SK-N-SH (cell line): ENCODE measurements at regions of chr2 and their contacts with region 1.

Region 1: GRCh38 chr2:217864963-217865772 is 137.6 kb downstream of the TNS1 start:
- DNase-seq: no peak
- H3K4me3 ChIP-seq: no peak overlapping the region
- H3K27ac ChIP-seq: no peak overlapping the region; a peak in 1 of 4 replicates
- H3K4me1 ChIP-seq: peaks cover 8 to 9% of the 10 kb centered on the region in 2 experiments; a peak in 2 of 4 replicates
- H3K27me3 ChIP-seq: no peaks in the 10 kb centered on the region
- CTCF ChIP-seq: no peak
- EP300 ChIP-seq: no peak
- RAD21 ChIP-seq: no peak

Region 2: DNA sequence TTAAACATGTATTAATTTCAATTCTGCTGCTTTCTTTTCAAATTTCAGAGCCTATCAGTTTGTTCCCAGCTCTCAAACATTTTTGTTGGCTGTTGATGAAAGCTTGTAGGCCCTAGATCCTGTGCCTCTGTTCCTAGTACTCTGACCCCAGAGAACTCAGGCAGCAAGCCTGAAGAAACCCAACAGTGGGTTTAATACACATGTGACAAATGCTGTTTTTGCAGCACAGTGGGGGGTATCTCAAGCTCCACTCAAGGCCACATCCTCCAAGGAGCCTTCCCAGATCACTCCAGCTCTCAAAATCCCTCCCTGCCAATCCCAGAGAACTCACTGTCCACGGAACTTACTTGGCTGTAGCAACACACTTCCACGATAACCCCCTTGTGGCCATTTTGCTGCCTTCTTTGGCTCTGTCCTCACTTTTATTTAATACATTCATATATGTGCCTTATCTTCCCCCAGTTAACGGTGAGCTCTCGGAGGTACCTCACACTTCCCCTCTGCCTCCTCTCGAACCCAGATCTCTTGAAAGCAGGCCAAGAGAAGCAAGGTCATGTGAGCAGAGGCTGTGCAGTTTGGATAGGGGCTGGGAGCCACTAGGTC is 15.2 kb after region 1 on chr2:
- CTCF ChIA-PET with region 1: interaction called, 11 read pairs
- POLR2A ChIA-PET with region 1: no interaction called
- DNase-seq: no peak
- H3K4me3 ChIP-seq: no peak overlapping the region
- H3K27ac ChIP-seq: no peak overlapping the region
- H3K4me1 ChIP-seq: peaks cover 0 to 16% of the 10 kb centered on the region in 2 experiments; a peak in 1 of 4 replicates
- H3K27me3 ChIP-seq: no peaks in the 10 kb centered on the region
- CTCF ChIP-seq: 0 out of 2 replicates have a peak, but pooled peaks have one; percentile 16
- EP300 ChIP-seq: no peak
- RAD21 ChIP-seq: no peak